ENCODE measurements at regions of chr16 and their contacts with region 1.

Region 1: DNA sequence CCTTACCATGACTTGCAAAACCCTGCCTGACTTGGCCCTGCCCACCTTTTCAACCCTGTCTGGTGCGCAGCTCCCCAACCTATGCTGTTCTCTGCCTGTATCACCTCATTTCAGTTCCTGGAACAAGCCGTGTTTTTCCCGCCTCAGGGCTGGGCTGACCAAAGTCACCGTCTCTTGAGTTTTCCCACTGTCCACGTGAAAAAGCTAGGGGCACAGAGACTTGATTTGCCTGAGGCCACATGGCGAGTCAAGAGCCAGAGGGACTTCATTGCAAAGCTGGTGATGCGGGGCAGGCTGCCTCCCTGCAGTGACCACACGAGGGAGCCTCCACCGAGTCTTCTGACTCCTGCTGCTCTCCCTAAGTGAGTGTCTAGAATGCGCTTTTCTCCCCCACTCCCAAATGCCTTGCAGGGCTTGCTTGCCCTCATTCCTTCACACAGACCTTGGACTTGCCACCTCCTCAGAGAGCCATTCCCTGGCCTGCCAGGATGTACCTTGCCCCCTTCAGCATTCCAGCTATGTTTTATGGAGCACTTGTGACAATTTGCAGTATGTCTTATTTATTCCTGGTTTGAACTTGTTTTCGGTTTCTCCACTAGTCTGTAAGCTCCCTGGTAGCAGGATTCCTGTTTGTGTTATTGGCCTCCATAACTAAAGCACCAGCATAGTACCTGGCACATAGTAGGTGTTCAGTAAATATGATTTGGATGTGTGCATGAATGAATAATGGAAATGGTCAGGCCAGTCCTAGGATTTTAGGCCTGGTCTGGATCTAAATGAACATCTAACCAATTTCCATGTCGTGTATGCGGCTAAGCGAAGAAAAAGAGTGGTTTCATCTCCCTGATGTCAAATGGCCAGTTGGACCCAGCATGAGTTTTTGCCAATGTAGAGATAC is 252.3 kb downstream of the SNX29 start:
- DNase-seq: peak; percentile 57 to 70
- ATAC-seq: peak; percentile 94 to 98
- H3K4me3 ChIP-seq: no peak overlapping the region
- H3K27ac ChIP-seq: peak overlapping the region in 1 of 2 experiments; percentile 28; a peak in 1 of 6 replicates
- H3K4me1 ChIP-seq: peaks cover 30% of the 10 kb centered on the region; the same call in 2 of the 3 replicates
- CTCF ChIP-seq: peak; percentile 72
- EP300 ChIP-seq: no peak
- POLR2A ChIP-seq: no peak
- RAD21 ChIP-seq: peak; percentile 68 to 70

Region 2: GRCh38 chr16:12215277-12216105 is 13.4 kb before region 1 on chr16:
- CTCF ChIA-PET with region 1: interaction called, 11 read pairs
- POLR2A ChIA-PET with region 1: no interaction called
- DNase-seq: no peak
- ATAC-seq: no peak
- H3K4me3 ChIP-seq: no peak overlapping the region
- H3K27ac ChIP-seq: no peak overlapping the region
- H3K4me1 ChIP-seq: peaks cover 13% of the 10 kb centered on the region
- CTCF ChIP-seq: no peak
- EP300 ChIP-seq: no peak
- POLR2A ChIP-seq: no peak
- RAD21 ChIP-seq: no peak

Region 3: DNA sequence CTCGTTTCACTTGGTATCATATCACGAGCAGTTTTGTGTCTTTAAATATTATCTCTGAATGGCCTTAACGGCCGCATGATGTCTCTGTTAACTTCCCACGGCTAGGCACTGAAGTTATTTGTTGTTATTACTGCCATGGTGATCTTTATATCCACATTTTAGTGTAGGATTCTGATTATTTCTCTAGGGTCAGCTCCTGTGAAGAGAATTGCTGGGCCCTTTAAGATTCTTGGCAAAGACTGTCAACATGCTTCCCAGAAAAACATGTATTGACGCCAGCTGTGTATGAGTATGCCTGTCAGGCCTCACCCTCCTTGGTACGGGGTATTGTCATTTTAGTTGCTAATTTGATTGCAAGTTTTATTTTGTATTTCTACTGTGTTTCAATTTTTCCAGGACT is 11.2 kb after region 1 on chr16:
- CTCF ChIA-PET with region 1: interaction called, 12 read pairs
- POLR2A ChIA-PET with region 1: no interaction called
- DNase-seq: no peak
- ATAC-seq: no peak
- H3K4me3 ChIP-seq: no peak overlapping the region
- H3K27ac ChIP-seq: no peak overlapping the region
- H3K4me1 ChIP-seq: no peaks in the 10 kb centered on the region
- CTCF ChIP-seq: no peak
- EP300 ChIP-seq: no peak
- POLR2A ChIP-seq: no peak
- RAD21 ChIP-seq: no peak

Region 4: DNA sequence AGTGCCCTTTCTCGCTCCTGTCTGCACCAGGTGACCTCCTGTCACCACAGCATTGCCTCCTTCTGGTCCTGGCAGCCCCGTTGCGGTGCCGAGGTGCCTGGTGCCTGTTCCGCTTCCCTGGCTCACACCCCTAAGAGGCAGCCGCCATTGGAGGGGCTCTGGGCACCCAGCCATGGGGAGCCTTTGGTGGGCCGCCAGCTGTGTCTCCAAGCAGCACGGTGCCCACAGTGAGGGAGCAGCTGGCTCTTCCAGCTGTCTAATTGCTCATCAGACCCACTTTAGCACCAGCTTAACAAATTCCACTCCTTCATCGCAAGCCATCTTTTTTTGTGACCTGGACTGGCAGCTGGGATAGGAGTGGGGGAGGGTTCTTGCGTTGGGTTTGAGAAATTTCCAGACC is 23.8 kb after region 1 on chr16:
- CTCF ChIA-PET with region 1: interaction called, 14 read pairs
- POLR2A ChIA-PET with region 1: no interaction called
- DNase-seq: no peak
- ATAC-seq: no peak
- H3K4me3 ChIP-seq: no peak overlapping the region
- H3K27ac ChIP-seq: no peak overlapping the region
- H3K4me1 ChIP-seq: no peaks in the 10 kb centered on the region
- CTCF ChIP-seq: no peak
- EP300 ChIP-seq: no peak
- POLR2A ChIP-seq: no peak
- RAD21 ChIP-seq: no peak

Measured in A549 (cell line).